Heart right ventricle (tissue), 16 donors: ENCODE measurements at regions of chr3 and their contacts with region 1.

Region 1: DNA sequence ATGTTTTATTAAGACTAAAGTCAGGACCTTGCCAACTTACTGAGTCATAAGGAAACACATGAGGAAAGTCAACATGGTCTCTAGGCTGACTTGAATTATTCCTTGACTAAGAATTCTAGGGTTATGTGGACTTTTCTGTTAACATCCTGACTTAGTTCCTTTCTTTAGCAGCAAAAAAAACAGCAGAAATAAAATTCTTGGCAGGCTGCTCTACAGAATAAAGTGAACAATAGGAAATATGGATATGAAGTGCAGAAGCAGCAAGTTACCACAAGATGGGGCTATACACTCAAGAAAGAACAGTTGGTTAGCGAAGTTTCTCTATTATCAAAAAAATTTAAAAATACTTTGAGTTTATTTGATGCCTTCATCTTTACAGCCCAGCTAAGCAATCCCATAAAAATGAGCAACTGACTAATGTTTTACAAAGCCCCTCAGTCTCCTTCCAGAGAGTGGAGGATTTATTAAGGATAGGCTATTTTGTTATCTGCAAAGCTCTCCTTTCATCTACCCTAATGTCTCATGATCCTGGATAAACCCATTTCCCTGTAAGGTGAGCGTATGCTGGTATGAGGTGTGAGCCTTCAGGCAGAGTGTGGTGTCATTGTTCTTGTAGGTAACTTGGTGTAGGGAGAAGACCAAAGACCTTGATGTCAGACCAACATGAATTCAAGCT is 23.1 kb upstream of the MCCC1 start:
- DNase-seq: no peak
- ATAC-seq: peak in 3 of 8 donors; percentile 22 to 60 (median 57)
- H3K4me3 ChIP-seq: no peak overlapping the region
- H3K27ac ChIP-seq: no peak overlapping the region
- H3K4me1 ChIP-seq: peaks cover 0 to 8% (median 0%) of the 10 kb centered on the region in 9 donors
- H3K27me3 ChIP-seq: peaks cover 0 to 22% (median 12%) of the 10 kb centered on the region in 7 donors
- CTCF ChIP-seq: peak; percentile 67 to 92 (median 86)

Region 2: DNA sequence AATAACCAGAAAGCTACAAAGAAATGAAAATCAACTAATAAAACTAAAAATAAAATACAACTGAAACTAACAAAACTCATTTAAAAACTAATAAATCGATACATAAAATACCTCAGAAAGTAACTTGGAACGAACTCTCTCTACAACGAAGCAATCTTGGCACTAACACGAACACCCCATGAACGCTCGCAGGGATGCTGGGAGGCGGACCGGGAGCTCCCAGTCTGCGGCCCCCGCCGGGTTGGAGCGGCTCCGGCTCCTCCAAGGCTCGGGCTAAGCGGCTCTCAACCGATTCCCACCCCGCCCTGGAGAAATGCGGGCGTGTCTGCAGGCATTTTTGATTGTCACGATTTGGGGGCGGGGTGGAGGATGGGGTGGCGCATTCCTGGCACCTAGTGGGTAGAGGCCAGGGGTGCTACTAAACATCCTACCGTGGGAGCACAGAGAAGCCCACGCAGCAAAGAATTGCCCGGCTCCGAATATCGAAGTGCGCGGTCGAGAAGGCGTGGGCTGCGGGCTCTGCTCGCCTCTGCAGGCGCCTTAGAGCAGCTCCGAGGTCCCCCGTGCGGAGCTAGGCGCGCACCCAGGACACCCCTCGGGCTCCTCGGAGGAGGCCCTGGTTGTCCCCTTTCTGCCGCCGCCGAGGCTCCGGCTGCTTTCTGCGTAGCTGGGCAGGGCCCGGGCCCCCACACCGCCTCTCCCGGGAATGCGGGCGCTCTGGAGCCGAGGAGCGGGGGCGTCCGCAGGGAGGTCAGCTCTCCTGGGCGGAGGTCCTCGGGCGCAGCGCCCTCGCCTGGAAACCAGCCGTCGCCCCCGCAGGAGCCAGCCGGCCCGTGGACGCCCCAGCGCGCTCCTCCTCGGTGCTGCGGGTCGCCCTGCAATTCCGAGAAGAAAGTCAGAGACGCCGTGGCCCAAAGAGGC is 56.5 kb after region 1 on chr3:
- intact Hi-C with region 1: loop called in 7 of 10 experiments (anchors 2 to 10 kb)
- DNase-seq: peak in 1 of 2 donors; percentile 30
- ATAC-seq: peak; percentile 53 to 72 (median 67)
- H3K4me3 ChIP-seq: peak overlapping the region; percentile 34 to 62 (median 57)
- H3K27ac ChIP-seq: no peak overlapping the region
- H3K4me1 ChIP-seq: peaks cover 0 to 23% (median 17%) of the 10 kb centered on the region in 9 donors
- H3K27me3 ChIP-seq: peaks cover 0 to 66% (median 53%) of the 10 kb centered on the region in 7 donors
- CTCF ChIP-seq: peak in 4 of 9 donors; percentile 12 to 34 (median 32)

Region 3: GRCh38 chr3:183188895-183189462 is 66.6 kb after region 1 on chr3:
- intact Hi-C with region 1: loop called in 9 of 10 experiments (anchors 2 to 10 kb)
- DNase-seq: peak in 1 of 2 donors; percentile 44
- ATAC-seq: peak in 5 of 8 donors; percentile 27 to 59 (median 41)
- H3K4me3 ChIP-seq: no peak overlapping the region
- H3K27ac ChIP-seq: no peak overlapping the region
- H3K4me1 ChIP-seq: peaks cover 0 to 20% (median 0%) of the 10 kb centered on the region in 9 donors
- H3K27me3 ChIP-seq: peaks cover 0 to 4% (median 0%) of the 10 kb centered on the region in 7 donors
- CTCF ChIP-seq: peak in 7 of 9 donors; percentile 29 to 60 (median 43)

Region 4: DNA sequence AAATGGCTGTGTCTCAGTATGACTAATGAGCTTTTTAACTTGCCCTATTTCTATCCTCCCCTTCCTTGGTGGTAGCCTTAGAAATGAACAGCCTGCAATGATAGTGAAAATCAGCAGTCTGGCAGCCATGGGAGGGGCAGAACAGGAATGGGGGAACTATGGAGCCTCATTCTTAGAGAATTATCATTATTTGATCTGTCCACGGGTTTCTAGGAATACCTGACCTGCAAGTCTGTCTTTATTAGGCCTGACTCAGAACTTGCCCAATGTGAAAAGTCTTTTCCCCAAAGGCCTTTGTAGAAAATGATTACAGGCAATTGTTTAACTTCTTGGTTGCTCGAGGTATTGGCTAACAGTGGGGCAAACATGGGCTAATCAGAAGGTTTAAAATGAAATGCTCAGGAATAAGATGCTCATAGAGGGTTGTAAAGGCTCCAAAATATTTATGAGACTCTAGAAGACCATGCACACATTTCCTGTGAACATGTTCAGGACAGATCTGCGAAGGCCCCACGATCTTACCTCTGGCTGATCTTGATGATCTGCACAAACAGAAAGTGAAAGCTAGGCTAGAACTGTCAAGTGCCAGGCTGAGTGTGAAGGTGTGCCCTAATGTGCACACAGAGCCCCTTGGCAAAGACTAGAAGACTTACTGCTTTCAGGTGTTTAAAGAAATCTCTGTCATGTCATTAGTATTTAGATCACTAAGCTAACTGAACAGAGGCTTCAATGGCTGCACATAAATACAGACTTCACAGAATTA is 79.7 kb after region 1 on chr3:
- intact Hi-C with region 1: no loop called
- DNase-seq: no peak
- ATAC-seq: no peak
- H3K4me3 ChIP-seq: no peak overlapping the region
- H3K27ac ChIP-seq: no peak overlapping the region
- H3K4me1 ChIP-seq: no peaks in the 10 kb centered on the region
- H3K27me3 ChIP-seq: no peaks in the 10 kb centered on the region
- CTCF ChIP-seq: no peak

Region 5: GRCh38 chr3:183349421-183350157 is 227.2 kb after region 1 on chr3:
- intact Hi-C with region 1: no loop called
- DNase-seq: no peak
- ATAC-seq: no peak
- H3K4me3 ChIP-seq: no peak overlapping the region
- H3K27ac ChIP-seq: peak overlapping the region in 1 of 10 donors; percentile 4
- H3K4me1 ChIP-seq: no peaks in the 10 kb centered on the region
- H3K27me3 ChIP-seq: no peaks in the 10 kb centered on the region
- CTCF ChIP-seq: no peak

Region 6: DNA sequence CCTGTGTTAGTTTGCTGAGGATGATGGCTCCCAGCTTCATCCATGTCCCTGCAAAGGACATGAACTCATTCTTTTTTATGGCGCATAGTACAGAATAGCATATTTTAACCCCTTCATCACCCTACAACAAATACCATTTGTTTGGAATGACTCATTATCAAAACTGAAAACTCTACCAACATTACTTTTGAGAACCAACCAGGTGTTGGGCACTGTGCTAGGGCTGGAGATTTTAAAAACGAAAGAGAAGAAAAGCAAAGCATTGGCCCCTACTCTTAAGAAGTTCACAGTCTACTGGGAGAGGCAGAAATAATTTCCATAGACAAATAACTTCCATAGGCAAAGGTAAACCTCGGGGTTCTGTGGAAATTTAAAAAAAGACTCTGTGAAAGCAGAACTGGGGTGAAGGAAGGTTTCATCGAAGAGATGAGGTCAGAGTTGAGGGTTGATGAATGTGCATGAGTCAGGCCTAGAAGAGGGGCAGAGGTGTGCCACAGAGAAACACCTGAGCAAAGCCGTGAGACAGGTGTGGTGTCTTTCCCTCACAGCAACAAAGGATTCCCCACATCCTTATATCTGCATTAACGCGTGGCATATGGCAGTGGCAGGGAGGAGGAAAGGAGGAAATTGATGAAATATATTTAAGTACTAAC is 255.0 kb after region 1 on chr3:
- intact Hi-C with region 1: loop called in 2 of 10 experiments (anchors 1 to 5 kb)
- DNase-seq: no peak
- ATAC-seq: no peak
- H3K4me3 ChIP-seq: no peak overlapping the region
- H3K27ac ChIP-seq: no peak overlapping the region
- H3K4me1 ChIP-seq: peaks cover 0 to 49% (median 0%) of the 10 kb centered on the region in 9 donors
- H3K27me3 ChIP-seq: peaks cover 0 to 6% (median 0%) of the 10 kb centered on the region in 7 donors
- CTCF ChIP-seq: no peak